HepG2 (cell line): ENCODE measurements at regions of chr6 and their contacts with region 1.

Region 1: GRCh38 chr6:106417572-106418147 is 57.1 kb downstream of the CRYBG1 start:
- DNase-seq: no peak
- ATAC-seq: peak; percentile 56
- H3K4me3 ChIP-seq: no peak overlapping the region
- H3K27ac ChIP-seq: no peak overlapping the region
- H3K4me1 ChIP-seq: peaks cover 10% of the 10 kb centered on the region
- H3K27me3 ChIP-seq: 0 out of 5 replicates have a peak, but pooled peaks cover 0 to 8% of the 10 kb centered on the region in 2 experiments
- CTCF ChIP-seq: no peak
- EP300 ChIP-seq: no peak
- POLR2A ChIP-seq: no peak
- RAD21 ChIP-seq: no peak

Region 2: DNA sequence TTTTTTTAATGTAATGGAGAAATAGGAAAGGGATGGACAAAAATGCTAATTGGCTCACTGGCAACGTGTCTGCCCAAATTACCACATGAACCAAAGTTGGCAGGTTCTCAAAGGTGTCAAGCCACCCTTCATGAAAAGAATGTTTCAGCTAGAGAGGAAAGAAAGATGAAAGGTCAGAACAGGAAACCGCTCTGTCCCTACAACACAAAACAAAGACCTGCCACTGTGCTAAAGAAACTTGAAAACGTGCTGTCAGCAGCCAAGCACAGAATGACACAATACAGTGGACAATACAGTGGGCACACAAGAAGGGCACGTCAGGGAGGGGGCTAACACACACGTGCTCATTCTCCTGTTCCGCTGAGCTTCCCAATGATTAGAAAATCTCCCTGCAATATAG is 1019.7 kb before region 1 on chr6:
- CTCF ChIA-PET with region 1: no interaction called
- POLR2A ChIA-PET with region 1: no interaction called
- in situ Hi-C with region 1: no loop called
- intact Hi-C with region 1: loop called (anchors 5 kb)
- DNase-seq: peak; percentile 63
- ATAC-seq: 0 out of 3 replicates have a peak, but pooled peaks have one; percentile 9
- H3K4me3 ChIP-seq: peak overlapping the region in 1 of 3 experiments; percentile 15; a peak in 1 of 6 replicates
- H3K27ac ChIP-seq: peak overlapping the region; percentile 19
- H3K4me1 ChIP-seq: peaks cover 45% of the 10 kb centered on the region
- H3K27me3 ChIP-seq: no peaks in the 10 kb centered on the region
- CTCF ChIP-seq: no peak
- EP300 ChIP-seq: peak in 1 of 2 experiments; percentile 20; a peak in 1 of 4 replicates
- POLR2A ChIP-seq: no peak
- RAD21 ChIP-seq: no peak